Right ventricle myocardium inferior (tissue), 1 donor: ENCODE measurements at regions of chr1 and their contacts with region 1.

Region 1: DNA sequence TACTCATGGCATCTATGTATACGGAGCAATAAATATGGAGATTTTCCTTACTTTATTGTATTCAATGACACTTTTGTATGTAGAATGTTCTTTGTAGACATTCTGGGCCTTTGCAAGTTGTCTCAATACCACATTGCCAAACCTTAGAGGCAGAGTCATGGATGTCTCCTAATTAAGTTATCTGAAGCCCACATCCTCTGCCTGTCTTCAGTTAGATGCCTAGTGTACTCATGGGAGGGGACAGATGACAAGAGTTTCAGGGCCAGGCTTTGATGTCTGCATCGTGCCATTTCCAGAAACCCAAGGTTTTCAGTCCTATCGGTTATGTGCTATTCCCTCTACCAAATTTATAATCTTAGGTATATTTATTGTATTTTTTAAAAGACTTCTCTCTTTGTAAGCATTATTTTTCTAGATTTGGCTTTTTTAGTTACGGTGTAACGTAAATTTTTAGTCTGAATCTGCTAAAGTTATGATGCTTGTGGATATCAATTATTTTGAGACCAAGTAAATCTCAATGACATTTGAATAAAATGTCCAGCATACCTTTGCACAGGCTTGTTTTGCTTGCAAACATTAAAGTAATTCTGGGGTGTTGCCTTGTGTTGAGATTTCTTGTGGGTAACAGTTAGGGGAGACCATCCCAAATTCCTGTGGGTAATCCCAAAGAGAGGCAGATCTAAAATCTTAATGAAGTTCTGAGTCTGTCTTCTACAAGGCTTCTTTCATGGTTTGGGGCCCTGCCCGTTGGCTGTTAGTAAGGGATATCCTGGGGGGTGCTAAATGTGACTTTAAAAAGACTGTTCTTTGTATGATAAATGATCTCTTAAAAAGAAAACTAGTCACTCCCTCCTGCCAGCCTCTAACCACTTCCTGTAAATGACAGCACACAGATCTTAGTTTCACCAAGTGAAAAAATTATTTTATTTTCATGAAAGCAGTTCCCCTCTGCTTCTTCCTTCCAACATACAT is 8.0 kb upstream of the MACF1 start:
- DNase-seq: no peak
- ATAC-seq: no peak

Region 2: GRCh38 chr1:39132505-39133339 is 63.8 kb before region 1 on chr1:
- intact Hi-C with region 1: loop called (anchors 2 kb)
- DNase-seq: peak; percentile 81
- ATAC-seq: peak; percentile 74

Region 3: DNA sequence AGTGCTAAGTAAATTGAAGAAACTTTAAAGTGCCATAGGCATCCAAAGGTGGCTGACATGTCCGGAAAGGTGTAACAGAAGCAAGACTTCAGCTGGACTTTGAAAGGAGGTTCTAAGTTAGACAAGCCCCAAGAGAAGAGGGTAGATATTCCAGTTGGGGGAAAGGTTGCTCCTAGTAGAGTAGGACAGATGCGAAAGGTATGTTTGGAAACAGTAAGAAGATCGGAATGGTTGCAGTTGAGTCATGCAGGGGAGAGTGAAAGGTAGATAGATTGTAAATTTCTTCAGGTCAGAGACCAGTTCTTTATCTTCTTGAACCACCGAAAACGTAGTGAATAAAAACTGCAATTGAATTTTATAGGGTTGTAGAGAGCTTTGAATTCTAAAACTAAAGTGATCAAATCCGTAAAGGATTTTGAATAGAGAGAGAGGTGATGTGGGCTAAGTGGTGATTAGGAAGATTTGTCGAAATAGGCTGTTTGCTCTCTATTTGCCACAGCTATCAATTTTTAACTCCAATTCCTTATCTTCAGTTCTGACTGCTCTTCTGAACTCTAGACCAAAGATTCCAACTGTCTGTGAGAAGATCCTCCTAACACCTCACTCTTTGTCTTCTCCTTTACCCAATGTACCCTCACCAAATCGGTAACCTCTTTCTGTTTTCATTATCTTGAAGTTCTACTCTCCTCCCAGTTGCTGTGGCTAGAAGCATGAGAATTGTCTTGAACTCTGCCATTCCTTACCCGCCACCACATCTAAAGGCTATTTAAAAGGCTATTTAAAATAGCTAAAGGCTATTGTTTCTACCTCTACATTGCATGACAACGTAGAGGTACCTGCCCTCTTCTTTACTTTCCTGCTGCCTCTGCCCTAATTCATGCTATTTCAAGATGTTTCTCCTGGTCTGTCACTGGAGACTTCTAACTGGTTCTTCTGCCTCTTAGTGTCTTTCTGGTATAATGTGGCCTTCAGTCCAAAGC is 24.7 kb after region 1 on chr1:
- intact Hi-C with region 1: no loop called
- DNase-seq: no peak
- ATAC-seq: no peak

Region 4: GRCh38 chr1:39258146-39258924 is 61.8 kb after region 1 on chr1:
- intact Hi-C with region 1: loop called (anchors 1 kb)
- DNase-seq: no peak
- ATAC-seq: peak; percentile 79